ENCODE measurements at regions of chr12 and their contacts with region 1.

Region 1: GRCh38 chr12:8078398-8078797 is 3.7 kb upstream of the NECAP1 start:
- DNase-seq: peak; percentile 36
- ATAC-seq: 0 out of 2 replicates have a peak, but pooled peaks have one; percentile 12
- H3K4me3 Mint-ChIP-seq: no peak overlapping the region
- H3K27ac Mint-ChIP-seq: no peak overlapping the region
- H3K4me1 Mint-ChIP-seq: peaks cover 40% of the 10 kb centered on the region
- H3K27me3 Mint-ChIP-seq: no peaks in the 10 kb centered on the region; the same call in 1 of the 2 replicates
- CTCF ChIP-seq: peak; percentile 37; the same call in 1 of the 2 replicates

Region 2: DNA sequence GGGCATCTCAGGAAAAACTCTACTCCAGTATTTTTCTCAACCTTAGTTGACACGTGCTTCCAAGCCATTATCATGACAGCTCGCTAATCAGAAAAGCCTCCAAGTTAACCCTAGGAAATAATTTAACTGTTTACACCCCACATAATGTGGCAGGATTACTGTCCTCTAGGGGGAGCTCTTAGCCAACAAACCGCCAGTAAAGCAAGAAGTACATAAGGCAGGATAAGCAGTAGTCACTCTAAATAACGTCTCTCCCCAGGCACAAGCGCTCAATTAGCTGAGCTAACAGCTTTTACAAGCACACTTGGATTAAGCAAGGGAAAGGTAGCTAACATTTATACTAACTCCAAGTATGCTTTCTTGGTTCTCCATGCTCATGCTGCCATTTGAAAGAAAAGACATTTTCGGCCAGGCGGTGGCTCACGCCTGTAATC is 435.5 kb before region 1 on chr12:
- CTCF ChIA-PET with region 1: interaction called, 14 read pairs
- POLR2A ChIA-PET with region 1: no interaction called
- DNase-seq: peak; percentile 45
- ATAC-seq: no peak
- H3K4me3 Mint-ChIP-seq: no peak overlapping the region
- H3K27ac Mint-ChIP-seq: peak overlapping the region; percentile 2; the same call in 1 of the 2 replicates
- H3K4me1 Mint-ChIP-seq: peaks cover 64% of the 10 kb centered on the region
- H3K27me3 Mint-ChIP-seq: no peaks in the 10 kb centered on the region
- CTCF ChIP-seq: peak; percentile 89

Region 3: GRCh38 chr12:7832059-7832696 is 246.2 kb before region 1 on chr12:
- CTCF ChIA-PET with region 1: interaction called, 18 read pairs
- POLR2A ChIA-PET with region 1: interaction called, 3 read pairs
- DNase-seq: peak; percentile 34
- ATAC-seq: peak; percentile 98
- H3K4me3 Mint-ChIP-seq: no peak overlapping the region
- H3K27ac Mint-ChIP-seq: peak overlapping the region; percentile 72
- H3K4me1 Mint-ChIP-seq: peaks cover 30% of the 10 kb centered on the region
- H3K27me3 Mint-ChIP-seq: no peaks in the 10 kb centered on the region
- CTCF ChIP-seq: no peak; the same call in 1 of the 2 replicates

Region 4: DNA sequence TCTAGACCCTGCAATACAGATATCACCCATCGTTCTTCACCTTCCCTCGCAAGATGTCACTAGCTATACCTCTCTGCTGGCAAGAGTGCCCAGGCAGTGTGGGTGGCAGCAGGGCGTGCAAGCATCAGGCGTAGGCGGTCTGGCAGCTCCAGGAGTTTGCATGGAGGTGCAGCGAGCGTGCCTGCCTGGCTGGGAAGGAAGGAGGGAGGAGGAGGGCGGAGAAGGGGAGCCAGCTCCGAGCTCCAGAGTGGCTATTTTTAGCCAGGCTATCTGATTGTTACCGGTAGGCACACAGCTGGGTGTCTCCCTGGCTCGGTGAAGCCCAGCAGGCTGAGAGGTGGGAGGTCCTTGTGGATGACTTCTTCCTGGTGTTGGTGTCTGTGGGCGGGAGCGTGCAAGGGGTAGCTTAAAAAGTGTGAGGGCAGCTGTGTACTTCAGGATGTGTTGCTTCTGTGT is 39.7 kb before region 1 on chr12:
- CTCF ChIA-PET with region 1: interaction called, 18 read pairs
- POLR2A ChIA-PET with region 1: no interaction called
- DNase-seq: peak; percentile 69
- ATAC-seq: peak; percentile 90
- H3K4me3 Mint-ChIP-seq: peak overlapping the region; percentile 59
- H3K27ac Mint-ChIP-seq: no peak overlapping the region
- H3K4me1 Mint-ChIP-seq: peaks cover 60% of the 10 kb centered on the region
- H3K27me3 Mint-ChIP-seq: no peaks in the 10 kb centered on the region
- CTCF ChIP-seq: no peak

Region 5: GRCh38 chr12:8045952-8046944 is 32.1 kb before region 1 on chr12:
- CTCF ChIA-PET with region 1: interaction called, 41 read pairs
- POLR2A ChIA-PET with region 1: no interaction called
- DNase-seq: peak; percentile 86
- ATAC-seq: peak; percentile 88
- H3K4me3 Mint-ChIP-seq: no peak overlapping the region
- H3K27ac Mint-ChIP-seq: no peak overlapping the region
- H3K4me1 Mint-ChIP-seq: no peaks in the 10 kb centered on the region
- H3K27me3 Mint-ChIP-seq: no peaks in the 10 kb centered on the region
- CTCF ChIP-seq: peak; percentile 78

Region 6: DNA sequence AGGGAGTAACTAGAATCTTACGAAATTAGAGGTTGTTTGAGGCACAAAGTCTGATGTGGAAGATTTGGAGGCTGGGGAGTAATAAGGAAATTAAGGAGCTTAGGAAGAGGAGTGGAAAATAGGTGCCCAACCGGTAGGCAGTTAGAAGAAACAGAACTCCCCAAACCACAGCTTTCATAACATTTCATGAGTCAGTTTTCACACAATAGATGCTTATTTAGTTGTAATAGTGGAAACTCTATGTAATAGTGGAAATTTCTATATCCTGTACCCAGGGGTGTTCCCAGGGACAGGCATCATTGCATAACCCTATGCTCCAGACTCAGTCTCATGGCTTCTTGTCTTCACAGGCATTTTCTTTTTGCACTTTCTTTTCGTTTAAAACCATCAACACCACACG is 20.6 kb before region 1 on chr12:
- CTCF ChIA-PET with region 1: interaction called, 10 read pairs
- POLR2A ChIA-PET with region 1: no interaction called
- DNase-seq: no peak
- ATAC-seq: no peak
- H3K4me3 Mint-ChIP-seq: no peak overlapping the region
- H3K27ac Mint-ChIP-seq: no peak overlapping the region
- H3K4me1 Mint-ChIP-seq: peaks cover 8% of the 10 kb centered on the region
- H3K27me3 Mint-ChIP-seq: no peaks in the 10 kb centered on the region
- CTCF ChIP-seq: no peak

Measured in WTC11 (cell line).